ENCODE measurements at regions of chrX and their contacts with region 1.

Region 1: DNA sequence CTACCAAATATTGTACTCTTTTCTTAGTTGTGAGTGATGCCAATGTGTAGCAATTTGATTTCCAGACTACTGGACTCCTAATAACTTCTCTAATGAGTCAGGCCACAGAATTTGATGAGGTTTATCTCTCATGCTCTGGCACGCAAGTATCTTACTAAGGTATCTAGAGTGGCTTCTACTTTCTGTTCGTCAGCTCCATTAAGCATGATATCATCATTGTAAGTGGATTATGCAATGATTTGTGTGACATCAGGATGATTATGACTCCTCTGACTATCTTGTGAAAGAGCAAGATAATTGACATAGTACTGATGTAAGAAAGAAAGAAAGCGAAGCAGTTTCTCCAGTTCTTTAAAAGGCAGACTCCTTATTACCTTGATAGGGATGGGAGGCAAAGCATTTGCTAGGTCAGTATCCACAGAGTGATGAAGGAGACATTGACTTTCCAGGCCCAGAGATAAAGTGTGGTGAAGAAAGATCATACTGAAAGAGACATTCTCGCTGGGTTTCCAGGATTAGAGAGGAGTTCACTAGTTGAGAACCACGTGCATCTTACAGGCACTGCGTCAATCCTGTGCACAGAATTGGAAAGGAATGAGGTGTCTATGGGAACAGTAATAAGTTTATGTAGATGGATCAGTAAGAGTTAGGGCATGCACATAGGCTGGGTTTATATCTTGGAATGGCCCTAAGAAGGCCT is 161.9 kb upstream of the STK26 start:
- DNase-seq: no peak
- H3K4me3 ChIP-seq: no peak overlapping the region
- H3K27ac ChIP-seq: no peak overlapping the region
- H3K4me1 ChIP-seq: no peaks in the 10 kb centered on the region
- H3K27me3 ChIP-seq: peaks cover 7% of the 10 kb centered on the region
- CTCF ChIP-seq: no peak

Region 2: GRCh38 chrX:131783555-131784308 is 77.5 kb before region 1 on chrX:
- intact Hi-C with region 1: no loop called
- DNase-seq: peak; percentile 88
- H3K4me3 ChIP-seq: peak overlapping the region; percentile 2
- H3K27ac ChIP-seq: no peak overlapping the region
- H3K4me1 ChIP-seq: no peaks in the 10 kb centered on the region
- H3K27me3 ChIP-seq: no peaks in the 10 kb centered on the region
- CTCF ChIP-seq: peak; percentile 45

Region 3: GRCh38 chrX:132017431-132018185 is 156.4 kb after region 1 on chrX:
- intact Hi-C with region 1: no loop called
- DNase-seq: no peak
- H3K4me3 ChIP-seq: no peak overlapping the region
- H3K27ac ChIP-seq: no peak overlapping the region
- H3K4me1 ChIP-seq: no peaks in the 10 kb centered on the region
- H3K27me3 ChIP-seq: no peaks in the 10 kb centered on the region
- CTCF ChIP-seq: no peak

Region 4: GRCh38 chrX:132059973-132060540 is 198.8 kb after region 1 on chrX:
- intact Hi-C with region 1: loop called (anchors 10 kb)
- DNase-seq: no peak
- H3K4me3 ChIP-seq: no peak overlapping the region
- H3K27ac ChIP-seq: no peak overlapping the region
- H3K4me1 ChIP-seq: no peaks in the 10 kb centered on the region
- H3K27me3 ChIP-seq: no peaks in the 10 kb centered on the region
- CTCF ChIP-seq: no peak

Measured in colonic mucosa (tissue), 4 donors.